PC-3 (cell line): ENCODE measurements at regions of chr3 and their contacts with region 1.

Region 1: GRCh38 chr3:100899440-100900091 is 93.7 kb downstream of the ABI3BP start:
- DNase-seq: peak; percentile 89
- ATAC-seq: peak; percentile 66
- H3K4me3 ChIP-seq: peak overlapping the region; percentile 32
- H3K27ac ChIP-seq: peak overlapping the region; percentile 92
- H3K4me1 ChIP-seq: peaks cover 64% of the 10 kb centered on the region
- H3K27me3 ChIP-seq: no peaks in the 10 kb centered on the region
- CTCF ChIP-seq: no peak

Region 2: GRCh38 chr3:100869787-100870186 is 29.8 kb before region 1 on chr3:
- CTCF ChIA-PET with region 1: no interaction called
- POLR2A ChIA-PET with region 1: interaction called, 14 read pairs
- intact Hi-C with region 1: no loop called
- DNase-seq: no peak
- ATAC-seq: no peak
- H3K4me3 ChIP-seq: no peak overlapping the region
- H3K27ac ChIP-seq: no peak overlapping the region
- H3K4me1 ChIP-seq: peaks cover 16% of the 10 kb centered on the region
- H3K27me3 ChIP-seq: no peaks in the 10 kb centered on the region
- CTCF ChIP-seq: no peak

Region 3: GRCh38 chr3:101036213-101036618 is 136.7 kb after region 1 on chr3:
- CTCF ChIA-PET with region 1: no interaction called
- POLR2A ChIA-PET with region 1: no interaction called
- intact Hi-C with region 1: loop called (anchors 1 kb)
- DNase-seq: peak; percentile 99
- ATAC-seq: peak; percentile 96
- H3K4me3 ChIP-seq: 0 out of 2 replicates have a peak overlapping the region, but pooled peaks have one; percentile 0
- H3K27ac ChIP-seq: peak overlapping the region; percentile 65
- H3K4me1 ChIP-seq: peaks cover 45% of the 10 kb centered on the region
- H3K27me3 ChIP-seq: no peaks in the 10 kb centered on the region
- CTCF ChIP-seq: no peak

Region 4: DNA sequence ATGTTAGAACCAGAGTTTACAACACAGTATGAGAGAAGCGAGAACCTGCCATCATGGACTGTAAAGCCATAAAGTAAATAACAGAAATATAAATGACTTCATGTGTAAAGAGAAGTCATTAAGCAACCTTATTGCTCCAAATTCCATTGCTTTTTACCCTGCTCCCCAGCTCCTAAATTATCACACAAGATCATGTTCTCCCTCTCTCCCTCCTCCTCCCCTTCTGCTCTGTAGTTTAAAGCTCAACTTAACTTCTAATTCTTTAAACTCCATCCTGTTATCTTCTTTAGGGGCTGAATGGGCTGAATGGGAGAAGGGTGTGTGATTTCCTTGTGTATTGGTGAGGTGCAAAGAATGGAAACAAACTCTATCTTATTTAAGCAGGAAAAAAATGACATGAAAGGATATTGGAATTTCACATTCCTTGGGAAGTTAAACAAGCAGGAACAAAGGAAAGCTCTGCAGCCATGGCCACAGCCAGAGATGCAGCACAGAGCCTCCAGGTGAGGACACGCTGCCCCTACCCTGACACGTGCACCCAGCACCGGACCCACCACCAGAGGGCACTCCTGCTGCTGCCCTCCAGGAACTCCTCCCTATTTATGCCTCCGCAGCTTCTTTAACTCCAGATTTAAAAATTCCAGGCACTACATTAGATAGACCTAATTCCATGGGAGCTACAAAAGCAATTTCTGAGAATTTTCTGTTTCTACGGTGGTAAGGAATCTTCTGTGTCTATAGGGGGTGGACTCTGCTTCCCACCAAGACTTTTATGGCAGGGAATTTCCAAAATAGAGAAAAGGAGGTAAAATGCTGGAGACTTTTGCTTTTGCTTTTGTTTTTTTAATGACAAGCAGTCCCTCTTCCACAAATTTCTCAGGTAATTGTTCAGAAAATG is 170.6 kb after region 1 on chr3:
- CTCF ChIA-PET with region 1: no interaction called
- POLR2A ChIA-PET with region 1: no interaction called
- intact Hi-C with region 1: loop called (anchors 2 kb)
- DNase-seq: peak; percentile 70
- ATAC-seq: peak; percentile 23; the same call in 1 of the 2 replicates
- H3K4me3 ChIP-seq: no peak overlapping the region
- H3K27ac ChIP-seq: peak overlapping the region; percentile 22
- H3K4me1 ChIP-seq: peaks cover 52% of the 10 kb centered on the region
- H3K27me3 ChIP-seq: no peaks in the 10 kb centered on the region
- CTCF ChIP-seq: peak; percentile 92

Region 5: GRCh38 chr3:101273156-101273555 is 373.6 kb after region 1 on chr3:
- CTCF ChIA-PET with region 1: no interaction called
- POLR2A ChIA-PET with region 1: no interaction called
- intact Hi-C with region 1: loop called (anchors 1 kb)
- DNase-seq: no peak
- ATAC-seq: peak; percentile 14; the same call in 1 of the 2 replicates
- H3K4me3 ChIP-seq: no peak overlapping the region
- H3K27ac ChIP-seq: no peak overlapping the region
- H3K4me1 ChIP-seq: peaks cover 9% of the 10 kb centered on the region
- H3K27me3 ChIP-seq: no peaks in the 10 kb centered on the region
- CTCF ChIP-seq: no peak